HEK293 (cell line): ENCODE measurements at regions of chr17 and their contacts with region 1.

Region 1: GRCh38 chr17:57976594-57976993 is 11.5 kb downstream of the VEZF1 start:
- H3K4me3 ChIP-seq: no peak overlapping the region
- H3K27ac ChIP-seq: no peak overlapping the region
- H3K4me1 ChIP-seq: peaks cover 4% of the 10 kb centered on the region
- CTCF ChIP-seq: no peak

Region 2: GRCh38 chr17:57855391-57856035 is 121.1 kb before region 1 on chr17:
- CTCF ChIA-PET with region 1: interaction called, 15 read pairs
- POLR2A ChIA-PET with region 1: no interaction called
- H3K4me3 ChIP-seq: no peak overlapping the region
- H3K27ac ChIP-seq: no peak overlapping the region
- H3K4me1 ChIP-seq: peaks cover 14% of the 10 kb centered on the region
- CTCF ChIP-seq: no peak